ENCODE measurements at regions of chr5 and their contacts with region 1.

Region 1: GRCh38 chr5:52853650-52854049 is 65.9 kb downstream of the ITGA1 start:
- DNase-seq: no peak

Region 2: GRCh38 chr5:52825826-52826225 is 27.8 kb before region 1 on chr5:
- intact Hi-C with region 1: loop called (anchors 1 kb)
- DNase-seq: no peak

Measured in posterior cingulate gyrus (tissue), 11 donors.